Activated B cell treated with CpG ODN at 0.5 μM for 24 hours (primary cell): ENCODE measurements at regions of chr20 and their contacts with region 1.

Region 1: DNA sequence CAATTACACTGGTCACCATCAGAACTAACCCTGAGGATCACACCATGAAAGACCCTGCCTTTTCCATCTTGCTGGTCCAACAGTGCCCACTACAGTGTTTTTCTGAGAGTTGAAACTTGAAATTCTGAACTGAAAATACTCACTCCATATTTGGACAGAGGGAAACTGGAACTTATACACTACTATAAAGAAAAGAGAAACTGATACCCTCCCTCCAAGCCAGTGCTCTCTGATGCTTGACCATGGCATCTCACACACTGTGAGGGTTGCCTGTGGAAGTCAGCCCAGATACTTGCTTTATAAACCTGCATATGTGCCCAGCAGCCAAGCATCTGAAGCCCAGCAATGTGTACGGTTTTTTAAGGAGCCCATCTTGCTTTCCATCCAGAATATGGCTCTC is 108.7 kb downstream of the FOXA2 start:
- DNase-seq: no peak
- ATAC-seq: no peak
- H3K4me3 Mint-ChIP-seq: no peak overlapping the region
- H3K27ac Mint-ChIP-seq: no peak overlapping the region
- H3K4me1 Mint-ChIP-seq: no peaks in the 10 kb centered on the region
- H3K27me3 Mint-ChIP-seq: peaks cover 6% of the 10 kb centered on the region
- CTCF ChIP-seq: no peak

Region 2: DNA sequence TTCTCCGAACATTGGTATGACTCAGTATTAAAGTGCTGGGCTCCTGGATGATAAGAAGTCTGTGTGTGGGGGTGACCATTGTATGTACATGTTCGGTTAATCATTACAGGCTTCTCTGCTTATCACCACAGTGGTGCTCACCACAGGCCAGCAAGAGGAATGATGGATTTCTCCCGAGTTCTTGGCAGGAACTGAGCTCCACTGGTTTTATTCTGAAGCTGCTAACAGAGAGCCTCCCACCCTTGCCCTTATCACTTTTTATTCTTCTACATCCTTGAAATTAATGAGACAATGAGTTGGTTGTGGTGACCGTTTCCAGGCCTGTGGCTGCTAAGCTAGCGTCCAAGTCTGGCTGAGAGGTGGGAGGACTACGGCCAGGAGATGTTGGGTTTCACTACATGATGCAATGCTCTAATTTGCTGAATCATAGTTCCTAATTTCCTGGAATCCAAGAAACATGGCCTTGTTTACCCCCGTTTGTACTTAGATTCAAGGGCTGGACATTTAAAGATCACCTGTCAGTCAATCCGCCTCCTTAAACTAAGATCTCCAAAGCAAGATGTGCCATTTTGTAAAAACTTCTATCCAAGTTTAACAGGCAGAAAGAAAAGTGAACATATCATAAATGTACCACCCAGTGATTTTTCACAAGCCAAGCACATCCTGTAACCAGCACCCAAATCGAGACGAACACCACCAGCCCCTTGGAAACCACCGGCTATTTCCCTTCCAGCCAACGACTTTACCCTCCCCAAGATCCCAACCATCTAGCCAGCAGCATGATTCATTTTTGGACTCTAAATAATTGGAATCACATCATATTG is 63.8 kb before region 1 on chr20:
- CTCF ChIA-PET with region 1: no interaction called
- POLR2A ChIA-PET with region 1: no interaction called
- intact Hi-C with region 1: loop called (anchors 10 kb)
- DNase-seq: no peak
- ATAC-seq: no peak
- H3K4me3 Mint-ChIP-seq: no peak overlapping the region
- H3K27ac Mint-ChIP-seq: no peak overlapping the region
- H3K4me1 Mint-ChIP-seq: no peaks in the 10 kb centered on the region
- H3K27me3 Mint-ChIP-seq: no peaks in the 10 kb centered on the region
- CTCF ChIP-seq: no peak

Region 3: DNA sequence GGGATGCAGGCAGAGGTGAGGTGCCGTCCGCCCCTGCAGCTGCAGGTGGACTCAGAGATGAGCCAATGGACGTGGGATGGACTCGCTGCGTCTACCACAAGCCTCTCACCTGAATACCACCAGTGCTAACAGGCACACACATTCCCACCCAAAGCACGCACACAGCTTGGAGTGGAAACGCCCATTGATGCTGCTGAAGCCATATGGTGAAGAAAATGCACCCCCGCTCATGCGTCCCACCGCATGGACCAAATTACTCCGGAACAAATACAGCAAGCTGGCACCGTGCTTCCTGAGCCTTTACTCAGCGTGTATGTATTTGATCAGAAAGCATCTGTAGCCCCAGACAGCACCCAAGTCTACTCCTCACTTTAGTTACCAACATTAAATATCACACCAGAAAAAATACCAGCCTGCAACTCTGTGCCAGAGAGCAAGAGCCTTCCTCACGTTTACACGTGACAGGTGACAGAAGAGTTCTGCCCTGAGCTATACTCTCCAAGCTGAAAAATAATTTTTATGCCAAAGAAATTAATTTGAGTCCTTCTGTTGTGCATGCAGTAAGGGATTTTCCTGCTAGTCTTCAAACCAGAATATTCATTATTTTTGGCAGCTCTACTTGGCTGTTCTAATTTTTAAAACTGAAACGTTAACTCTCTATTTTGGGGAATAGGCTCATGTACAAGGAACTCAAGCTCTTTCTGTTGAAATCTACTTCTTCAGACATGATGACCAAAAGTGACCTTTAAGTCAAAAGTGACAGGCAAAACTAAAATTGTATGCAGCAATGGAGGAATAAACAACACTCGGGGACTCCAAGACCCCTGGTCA is 1935.6 kb after region 1 on chr20:
- CTCF ChIA-PET with region 1: no interaction called
- POLR2A ChIA-PET with region 1: no interaction called
- intact Hi-C with region 1: no loop called
- DNase-seq: no peak
- ATAC-seq: no peak
- H3K4me3 Mint-ChIP-seq: no peak overlapping the region
- H3K27ac Mint-ChIP-seq: no peak overlapping the region
- H3K4me1 Mint-ChIP-seq: no peaks in the 10 kb centered on the region
- H3K27me3 Mint-ChIP-seq: peaks cover 2% of the 10 kb centered on the region
- CTCF ChIP-seq: no peak